ENCODE measurements at regions of chr16 and their contacts with region 1.

Region 1: DNA sequence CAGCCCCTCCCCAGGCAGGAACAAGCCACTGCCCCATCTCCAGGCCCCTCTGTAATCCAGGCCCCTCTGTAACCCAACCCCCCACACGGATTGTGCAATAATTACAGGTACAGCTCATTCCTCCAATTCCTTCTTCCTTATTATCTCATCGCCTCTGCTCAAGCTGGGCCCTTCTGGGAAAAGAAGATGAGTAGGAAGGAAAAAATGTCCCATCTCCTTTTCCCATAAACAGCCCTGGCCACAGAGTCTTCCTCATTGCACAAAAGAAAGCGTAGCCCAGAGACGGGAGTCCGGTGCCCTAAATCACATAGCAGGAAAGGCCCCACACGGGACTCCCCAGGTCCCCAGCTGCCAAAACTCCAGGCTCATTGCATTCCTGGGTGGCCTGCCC is 3.6 kb upstream of the LITAFD start:
- DNase-seq: peak; percentile 69 to 74
- H3K4me3 ChIP-seq: no peak overlapping the region
- H3K4me3 Mint-ChIP-seq: no peak overlapping the region
- H3K27ac Mint-ChIP-seq: peak overlapping the region; percentile 60
- H3K4me1 ChIP-seq: peaks cover 18% of the 10 kb centered on the region
- H3K4me1 Mint-ChIP-seq: peaks cover 18% of the 10 kb centered on the region
- H3K27me3 ChIP-seq: no peaks in the 10 kb centered on the region
- H3K27me3 Mint-ChIP-seq: no peaks in the 10 kb centered on the region
- CTCF ChIP-seq: no peak

Region 2: GRCh38 chr16:8660841-8661301 is 217.6 kb before region 1 on chr16:
- CTCF ChIA-PET with region 1: no interaction called
- POLR2A ChIA-PET with region 1: no interaction called
- intact Hi-C with region 1: loop called (anchors 1 kb)
- DNase-seq: peak; percentile 75 to 84
- H3K4me3 ChIP-seq: no peak overlapping the region
- H3K4me3 Mint-ChIP-seq: no peak overlapping the region
- H3K27ac Mint-ChIP-seq: no peak overlapping the region
- H3K4me1 ChIP-seq: no peaks in the 10 kb centered on the region
- H3K4me1 Mint-ChIP-seq: no peaks in the 10 kb centered on the region
- H3K27me3 ChIP-seq: no peaks in the 10 kb centered on the region
- H3K27me3 Mint-ChIP-seq: no peaks in the 10 kb centered on the region
- CTCF ChIP-seq: peak; percentile 69 to 89

Region 3: GRCh38 chr16:8928467-8928957 is 50.0 kb after region 1 on chr16:
- CTCF ChIA-PET with region 1: no interaction called
- POLR2A ChIA-PET with region 1: no interaction called
- intact Hi-C with region 1: no loop called
- DNase-seq: no peak
- H3K4me3 ChIP-seq: no peak overlapping the region
- H3K4me3 Mint-ChIP-seq: no peak overlapping the region
- H3K27ac Mint-ChIP-seq: no peak overlapping the region
- H3K4me1 ChIP-seq: no peaks in the 10 kb centered on the region
- H3K4me1 Mint-ChIP-seq: peaks cover 12% of the 10 kb centered on the region
- H3K27me3 ChIP-seq: no peaks in the 10 kb centered on the region
- H3K27me3 Mint-ChIP-seq: no peaks in the 10 kb centered on the region
- CTCF ChIP-seq: no peak

Region 4: DNA sequence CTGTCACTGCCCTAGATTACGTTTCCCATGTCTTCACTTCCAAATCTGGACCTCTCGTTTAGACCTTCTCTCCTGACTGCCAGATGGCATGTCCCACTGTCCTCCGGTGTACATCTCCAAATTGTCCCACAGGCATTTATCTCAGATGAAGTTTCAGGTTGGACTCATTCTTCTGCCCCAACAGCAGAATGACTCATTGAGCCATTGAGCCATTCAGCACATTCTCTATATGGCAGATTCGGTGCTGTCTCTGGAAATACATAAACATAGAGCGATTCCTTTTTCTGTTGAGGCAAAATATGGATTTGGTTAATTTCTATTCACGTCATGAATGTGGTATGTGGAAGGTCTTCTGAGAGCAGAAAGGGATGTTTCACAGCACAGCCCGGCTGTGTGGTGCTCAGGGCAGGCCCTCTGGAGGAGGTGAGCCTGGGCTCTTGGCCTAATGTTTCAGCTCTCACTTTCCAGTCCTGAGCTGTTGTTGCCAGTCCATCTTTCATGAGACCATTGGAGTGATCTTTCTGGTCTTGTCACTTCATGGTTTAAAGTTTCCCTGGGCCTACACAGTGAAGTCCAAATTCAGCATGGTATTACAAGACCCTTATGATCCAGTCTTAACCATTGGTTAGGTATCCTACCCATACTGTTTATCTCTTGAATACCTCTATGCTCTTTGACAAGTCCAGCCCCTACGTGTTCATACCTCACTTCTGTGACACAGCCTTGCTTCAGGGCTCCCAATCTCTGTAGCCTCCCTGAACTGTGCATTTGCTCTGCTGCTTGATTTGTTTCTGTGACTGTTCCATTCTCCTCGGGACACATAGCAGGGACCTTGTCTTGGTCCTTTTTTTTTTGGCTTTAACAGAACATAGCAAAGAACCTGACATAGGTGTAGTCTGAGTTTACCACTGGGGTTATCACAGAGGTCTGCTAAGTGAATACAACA is 228.8 kb after region 1 on chr16:
- CTCF ChIA-PET with region 1: no interaction called
- POLR2A ChIA-PET with region 1: no interaction called
- intact Hi-C with region 1: no loop called
- DNase-seq: no peak
- H3K4me3 ChIP-seq: no peak overlapping the region
- H3K4me3 Mint-ChIP-seq: no peak overlapping the region
- H3K27ac Mint-ChIP-seq: no peak overlapping the region
- H3K4me1 ChIP-seq: peaks cover 9% of the 10 kb centered on the region
- H3K4me1 Mint-ChIP-seq: peaks cover 10% of the 10 kb centered on the region
- H3K27me3 ChIP-seq: no peaks in the 10 kb centered on the region
- H3K27me3 Mint-ChIP-seq: no peaks in the 10 kb centered on the region
- CTCF ChIP-seq: no peak